AG04450 (cell line): ENCODE measurements at regions of chr2 and their contacts with region 1.

Region 1: DNA sequence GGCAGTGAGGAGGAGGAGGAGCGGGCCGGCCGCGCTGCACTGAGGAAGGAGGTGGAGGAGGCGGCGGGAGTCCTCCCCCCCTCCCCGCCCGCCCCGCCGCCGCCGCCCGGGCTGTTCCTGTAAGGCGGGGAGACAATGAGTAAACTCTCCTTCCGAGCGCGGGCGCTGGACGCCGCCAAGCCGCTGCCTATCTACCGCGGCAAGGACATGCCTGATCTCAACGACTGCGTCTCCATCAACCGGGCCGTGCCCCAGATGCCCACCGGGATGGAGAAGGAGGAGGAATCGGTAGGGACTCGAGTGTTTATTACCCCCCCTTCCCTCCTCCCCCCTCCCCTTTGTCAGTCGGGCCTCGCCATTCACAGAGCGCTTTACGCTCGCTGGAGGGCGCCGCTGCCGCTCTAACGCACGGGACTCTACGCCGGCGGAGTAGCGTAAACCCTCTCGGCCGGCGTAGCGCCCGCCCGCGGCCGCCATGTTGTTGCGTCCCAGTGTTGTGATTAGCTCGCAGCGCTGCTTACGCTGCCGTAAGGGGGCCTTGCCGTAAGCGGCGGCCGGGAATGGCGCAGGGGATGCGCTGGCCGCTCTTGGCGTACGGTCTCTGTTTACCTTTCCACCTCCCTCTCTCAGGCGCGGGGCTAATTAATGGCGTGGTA is 460 bp downstream of the EPC2 start:
- DNase-seq: peak; percentile 73
- H3K4me3 ChIP-seq: peak overlapping the region; percentile 97
- H3K27ac ChIP-seq: peak overlapping the region; percentile 99
- H3K27me3 ChIP-seq: peaks cover 5% of the 10 kb centered on the region
- CTCF ChIP-seq: peak; percentile 45

Region 2: GRCh38 chr2:147595200-147595599 is 1049.8 kb before region 1 on chr2:
- CTCF ChIA-PET with region 1: interaction called, 13 read pairs
- POLR2A ChIA-PET with region 1: interaction called, 6 read pairs
- DNase-seq: no peak
- H3K4me3 ChIP-seq: no peak overlapping the region
- H3K27ac ChIP-seq: no peak overlapping the region
- H3K27me3 ChIP-seq: no peaks in the 10 kb centered on the region
- CTCF ChIP-seq: no peak

Region 3: GRCh38 chr2:148218326-148219075 is 426.5 kb before region 1 on chr2:
- CTCF ChIA-PET with region 1: no interaction called
- POLR2A ChIA-PET with region 1: interaction called, 10 read pairs
- DNase-seq: no peak
- H3K4me3 ChIP-seq: no peak overlapping the region
- H3K27ac ChIP-seq: no peak overlapping the region
- H3K27me3 ChIP-seq: no peaks in the 10 kb centered on the region
- CTCF ChIP-seq: no peak

Region 4: GRCh38 chr2:148622366-148622765 is 22.6 kb before region 1 on chr2:
- CTCF ChIA-PET with region 1: no interaction called
- POLR2A ChIA-PET with region 1: no interaction called
- DNase-seq: no peak
- H3K4me3 ChIP-seq: no peak overlapping the region
- H3K27ac ChIP-seq: no peak overlapping the region
- H3K27me3 ChIP-seq: peaks cover 3% of the 10 kb centered on the region
- CTCF ChIP-seq: no peak

Region 5: GRCh38 chr2:148658807-148659722 is 14.1 kb after region 1 on chr2:
- CTCF ChIA-PET with region 1: no interaction called
- POLR2A ChIA-PET with region 1: interaction called, 13 read pairs
- DNase-seq: peak; percentile 11
- H3K4me3 ChIP-seq: no peak overlapping the region
- H3K27ac ChIP-seq: no peak overlapping the region
- H3K27me3 ChIP-seq: no peaks in the 10 kb centered on the region
- CTCF ChIP-seq: no peak

Region 6: GRCh38 chr2:148926291-148926961 is 281.4 kb after region 1 on chr2:
- CTCF ChIA-PET with region 1: interaction called, 10 read pairs
- POLR2A ChIA-PET with region 1: no interaction called
- DNase-seq: peak; percentile 3
- H3K4me3 ChIP-seq: no peak overlapping the region
- H3K27ac ChIP-seq: no peak overlapping the region
- H3K27me3 ChIP-seq: peaks cover 2% of the 10 kb centered on the region
- CTCF ChIP-seq: peak; percentile 80